Natural killer cell (primary cell): ENCODE measurements at regions of chr10 and their contacts with region 1.

Region 1: GRCh38 chr10:21495752-21496342 is 29.6 kb downstream of the SKIDA1 start:
- DNase-seq: peak; percentile 90 to 92
- ATAC-seq: peak; percentile 87 to 95 (median 92)
- H3K4me3 ChIP-seq: peak overlapping the region; percentile 74
- H3K4me3 Mint-ChIP-seq: peak overlapping the region; percentile 92
- H3K27ac ChIP-seq: no peak overlapping the region
- H3K27ac Mint-ChIP-seq: no peak overlapping the region
- H3K4me1 ChIP-seq: peaks cover 45% of the 10 kb centered on the region
- H3K4me1 Mint-ChIP-seq: peaks cover 13 to 19% of the 10 kb centered on the region in 2 donors
- H3K27me3 ChIP-seq: peaks cover 52% of the 10 kb centered on the region
- H3K27me3 Mint-ChIP-seq: peaks cover 53 to 54% of the 10 kb centered on the region in 2 donors
- CTCF ChIP-seq: peak; percentile 96

Region 2: GRCh38 chr10:21458126-21458871 is 37.5 kb before region 1 on chr10:
- intact Hi-C with region 1: no loop called
- DNase-seq: no peak
- ATAC-seq: no peak
- H3K4me3 ChIP-seq: no peak overlapping the region
- H3K4me3 Mint-ChIP-seq: no peak overlapping the region
- H3K27ac ChIP-seq: no peak overlapping the region
- H3K27ac Mint-ChIP-seq: no peak overlapping the region
- H3K4me1 ChIP-seq: no peaks in the 10 kb centered on the region
- H3K4me1 Mint-ChIP-seq: no peaks in the 10 kb centered on the region
- H3K27me3 ChIP-seq: no peaks in the 10 kb centered on the region
- H3K27me3 Mint-ChIP-seq: peaks cover 9 to 28% of the 10 kb centered on the region in 2 donors
- CTCF ChIP-seq: no peak

Region 3: GRCh38 chr10:21516242-21517131 is 20.6 kb after region 1 on chr10:
- intact Hi-C with region 1: loop called (anchors 2 kb)
- DNase-seq: peak; percentile 36 to 79
- ATAC-seq: peak; percentile 72 to 83 (median 79)
- H3K4me3 ChIP-seq: peak overlapping the region; percentile 20
- H3K4me3 Mint-ChIP-seq: peak overlapping the region; percentile 86
- H3K27ac ChIP-seq: no peak overlapping the region
- H3K27ac Mint-ChIP-seq: no peak overlapping the region
- H3K4me1 ChIP-seq: peaks cover 34% of the 10 kb centered on the region
- H3K4me1 Mint-ChIP-seq: peaks cover 24 to 29% of the 10 kb centered on the region in 2 donors
- H3K27me3 ChIP-seq: peaks cover 82% of the 10 kb centered on the region
- H3K27me3 Mint-ChIP-seq: peaks cover 67 to 83% of the 10 kb centered on the region in 2 donors
- CTCF ChIP-seq: no peak

Region 4: GRCh38 chr10:21533467-21534279 is 37.8 kb after region 1 on chr10 and contains the start of gene MLLT10:
- intact Hi-C with region 1: loop called (anchors 5 kb)
- DNase-seq: peak; percentile 87 to 97
- ATAC-seq: peak; percentile 82 to 94 (median 83)
- H3K4me3 ChIP-seq: peak within 1 kb of the TSS; percentile 73
- H3K4me3 Mint-ChIP-seq: peak within 1 kb of the TSS; percentile 91
- H3K27ac ChIP-seq: peak within 1 kb of the TSS; percentile 69
- H3K27ac Mint-ChIP-seq: peak within 1 kb of the TSS; percentile 76 to 90
- H3K4me1 ChIP-seq: peaks cover 11% of the 10 kb centered on the region
- H3K4me1 Mint-ChIP-seq: peaks cover 16% of the 10 kb centered on the region in 2 donors
- H3K27me3 ChIP-seq: peaks cover 6% of the 10 kb centered on the region
- H3K27me3 Mint-ChIP-seq: peaks cover 5 to 9% of the 10 kb centered on the region in 2 donors
- CTCF ChIP-seq: peak; percentile 27
- total RNA-seq, gene MLLT10: 40.4 to 65.2 (median 60.0) TPM

Region 5: DNA sequence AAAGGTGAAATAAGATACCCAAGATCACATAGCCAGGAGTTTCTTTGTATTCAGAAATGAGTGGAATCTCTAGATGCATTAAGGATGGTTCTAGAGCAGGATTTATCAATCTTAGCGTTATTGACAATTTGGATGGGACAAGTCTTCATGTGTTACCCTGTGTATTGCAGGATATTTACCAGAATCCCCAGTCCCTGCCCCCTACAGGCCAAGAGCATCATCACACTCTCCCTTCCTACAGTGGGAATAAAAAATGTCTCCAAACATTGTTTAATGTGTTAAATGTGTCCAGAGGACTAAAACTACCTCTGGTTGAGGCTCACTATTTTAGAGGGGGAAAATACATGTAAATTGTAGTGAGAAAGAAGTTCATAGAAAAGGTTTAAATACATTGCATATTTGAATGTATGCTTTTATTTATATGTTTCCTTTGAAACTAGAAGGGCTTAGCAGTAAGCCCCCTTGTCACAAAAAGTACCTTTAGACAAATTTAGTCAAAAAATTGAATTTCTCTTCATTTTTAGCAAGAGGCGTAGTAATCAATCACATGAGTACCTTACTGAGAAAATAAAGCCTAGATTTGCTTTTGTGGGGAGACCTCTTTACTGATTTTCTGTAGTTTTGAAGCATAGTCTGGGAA is 179.4 kb after region 1 on chr10:
- intact Hi-C with region 1: loop called (anchors 2 kb)
- DNase-seq: peak in 1 of 2 donors; percentile 61
- ATAC-seq: peak; percentile 53 to 76 (median 55)
- H3K4me3 ChIP-seq: no peak overlapping the region
- H3K4me3 Mint-ChIP-seq: no peak overlapping the region
- H3K27ac ChIP-seq: no peak overlapping the region
- H3K27ac Mint-ChIP-seq: no peak overlapping the region
- H3K4me1 ChIP-seq: no peaks in the 10 kb centered on the region
- H3K4me1 Mint-ChIP-seq: peaks cover 0 to 3% of the 10 kb centered on the region in 2 donors
- H3K27me3 ChIP-seq: no peaks in the 10 kb centered on the region
- H3K27me3 Mint-ChIP-seq: no peaks in the 10 kb centered on the region
- CTCF ChIP-seq: peak; percentile 78

Region 6: GRCh38 chr10:21732067-21732772 is 236.4 kb after region 1 on chr10:
- intact Hi-C with region 1: loop called (anchors 1 kb)
- DNase-seq: peak in 1 of 2 donors; percentile 67
- ATAC-seq: peak; percentile 55 to 70 (median 65)
- H3K4me3 ChIP-seq: no peak overlapping the region
- H3K4me3 Mint-ChIP-seq: no peak overlapping the region
- H3K27ac ChIP-seq: no peak overlapping the region
- H3K27ac Mint-ChIP-seq: no peak overlapping the region
- H3K4me1 ChIP-seq: peaks cover 7% of the 10 kb centered on the region
- H3K4me1 Mint-ChIP-seq: peaks cover 23 to 27% of the 10 kb centered on the region in 2 donors
- H3K27me3 ChIP-seq: no peaks in the 10 kb centered on the region
- H3K27me3 Mint-ChIP-seq: no peaks in the 10 kb centered on the region
- CTCF ChIP-seq: peak; percentile 30

Region 7: DNA sequence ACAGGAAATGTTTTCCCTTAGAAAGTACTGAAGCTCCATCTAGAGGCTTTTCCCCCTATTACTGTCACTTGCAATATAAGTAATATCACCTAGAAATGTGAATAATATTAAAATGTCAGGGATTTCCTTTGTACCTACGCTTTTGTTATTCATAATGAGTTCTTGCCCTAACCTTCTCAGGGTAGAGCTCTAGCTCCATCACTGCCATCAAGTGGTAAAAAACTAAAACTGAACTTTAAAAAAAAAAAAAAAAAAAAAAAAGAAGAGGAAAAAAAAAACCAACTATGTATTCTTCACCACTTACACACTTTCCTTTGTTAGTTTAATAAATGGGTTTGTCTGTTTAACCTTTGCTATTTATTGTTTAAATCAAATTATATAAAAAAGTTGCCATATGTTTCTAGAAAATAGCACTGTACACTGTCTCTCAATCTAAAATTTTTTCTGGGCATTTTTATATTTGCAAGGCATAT is 457.8 kb after region 1 on chr10:
- intact Hi-C with region 1: loop called (anchors 5 kb)
- DNase-seq: peak in 1 of 2 donors; percentile 58
- ATAC-seq: peak in 2 of 3 donors; percentile 54 to 75
- H3K4me3 ChIP-seq: no peak overlapping the region
- H3K4me3 Mint-ChIP-seq: no peak overlapping the region
- H3K27ac ChIP-seq: no peak overlapping the region
- H3K27ac Mint-ChIP-seq: no peak overlapping the region
- H3K4me1 ChIP-seq: no peaks in the 10 kb centered on the region
- H3K4me1 Mint-ChIP-seq: peaks cover 9 to 11% of the 10 kb centered on the region in 2 donors
- H3K27me3 ChIP-seq: no peaks in the 10 kb centered on the region
- H3K27me3 Mint-ChIP-seq: no peaks in the 10 kb centered on the region
- CTCF ChIP-seq: peak; percentile 55

Region 8: GRCh38 chr10:22003079-22003913 is 507.4 kb after region 1 on chr10 and contains the start of gene DNAJC1:
- intact Hi-C with region 1: loop called (anchors 10 kb)
- DNase-seq: peak; percentile 96 to 98
- ATAC-seq: peak; percentile 84 to 96 (median 89)
- H3K4me3 ChIP-seq: peak within 1 kb of the TSS; percentile 96
- H3K4me3 Mint-ChIP-seq: peak within 1 kb of the TSS; percentile 91
- H3K27ac ChIP-seq: peak within 1 kb of the TSS; percentile 97
- H3K27ac Mint-ChIP-seq: peak within 1 kb of the TSS; percentile 85 to 88
- H3K4me1 ChIP-seq: peaks cover 4% of the 10 kb centered on the region
- H3K4me1 Mint-ChIP-seq: peaks cover 38 to 45% of the 10 kb centered on the region in 2 donors
- H3K27me3 ChIP-seq: no peaks in the 10 kb centered on the region
- H3K27me3 Mint-ChIP-seq: peaks cover 0 to 5% of the 10 kb centered on the region in 2 donors
- CTCF ChIP-seq: peak; percentile 9
- total RNA-seq, gene DNAJC1: 38.4 to 63.7 (median 50.6) TPM